T-cell (primary cell): ENCODE measurements at regions of chr17 and their contacts with region 1.

Region 1: DNA sequence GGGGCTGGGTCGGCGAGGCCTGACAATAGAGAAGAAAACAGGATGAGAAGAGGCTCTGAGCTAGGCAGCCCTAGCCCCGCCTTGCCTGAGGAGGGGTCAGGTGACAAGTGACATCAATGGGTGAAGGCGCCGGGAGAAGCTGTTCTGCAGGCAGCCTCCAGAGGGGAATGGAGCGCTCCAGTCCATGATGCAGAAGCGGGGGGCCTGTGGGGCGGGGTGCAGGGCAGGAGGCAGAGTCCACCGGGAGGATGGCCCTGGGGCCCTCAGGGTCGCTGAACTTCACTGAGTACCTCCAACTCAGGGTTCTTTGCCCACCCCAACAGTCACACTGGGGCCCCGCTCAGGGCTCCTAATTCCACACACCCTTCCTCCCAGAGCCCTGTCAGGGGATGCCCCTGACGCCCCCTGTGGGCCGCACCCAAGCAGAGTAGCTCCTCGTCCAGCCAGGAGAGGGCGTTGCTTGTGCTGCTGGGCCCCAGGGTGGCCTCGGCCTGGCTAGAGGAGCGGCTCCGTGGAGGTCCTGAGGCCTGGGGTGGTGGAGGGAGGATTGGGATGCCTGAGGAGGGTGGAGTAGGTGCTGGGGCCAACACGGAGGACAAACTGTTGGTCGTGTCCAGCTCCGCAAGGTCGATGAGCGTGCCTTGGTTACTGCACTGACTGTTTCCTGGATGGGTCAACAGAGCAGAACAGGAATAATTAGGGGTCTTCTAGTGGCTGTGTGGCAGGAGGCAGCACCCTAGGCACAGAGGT is 20.8 kb downstream of the GGA3 start:
- DNase-seq: peak in 10 of 35 experiments; percentile 20 to 49 (median 28)
- ATAC-seq: peak in 3 of 4 experiments; percentile 11 to 20 (median 18)
- H3K4me3 ChIP-seq: no peak overlapping the region
- H3K4me3 Mint-ChIP-seq: no peak overlapping the region
- H3K27ac ChIP-seq: no peak overlapping the region
- H3K27ac Mint-ChIP-seq: peak overlapping the region; percentile 16 to 65
- H3K4me1 ChIP-seq: peaks cover 0 to 63% of the 10 kb centered on the region in 2 experiments
- H3K4me1 Mint-ChIP-seq: peaks cover 26 to 43% (median 34%) of the 10 kb centered on the region in 3 donors
- H3K27me3 ChIP-seq: no peaks in the 10 kb centered on the region
- H3K27me3 Mint-ChIP-seq: no peaks in the 10 kb centered on the region

Region 2: DNA sequence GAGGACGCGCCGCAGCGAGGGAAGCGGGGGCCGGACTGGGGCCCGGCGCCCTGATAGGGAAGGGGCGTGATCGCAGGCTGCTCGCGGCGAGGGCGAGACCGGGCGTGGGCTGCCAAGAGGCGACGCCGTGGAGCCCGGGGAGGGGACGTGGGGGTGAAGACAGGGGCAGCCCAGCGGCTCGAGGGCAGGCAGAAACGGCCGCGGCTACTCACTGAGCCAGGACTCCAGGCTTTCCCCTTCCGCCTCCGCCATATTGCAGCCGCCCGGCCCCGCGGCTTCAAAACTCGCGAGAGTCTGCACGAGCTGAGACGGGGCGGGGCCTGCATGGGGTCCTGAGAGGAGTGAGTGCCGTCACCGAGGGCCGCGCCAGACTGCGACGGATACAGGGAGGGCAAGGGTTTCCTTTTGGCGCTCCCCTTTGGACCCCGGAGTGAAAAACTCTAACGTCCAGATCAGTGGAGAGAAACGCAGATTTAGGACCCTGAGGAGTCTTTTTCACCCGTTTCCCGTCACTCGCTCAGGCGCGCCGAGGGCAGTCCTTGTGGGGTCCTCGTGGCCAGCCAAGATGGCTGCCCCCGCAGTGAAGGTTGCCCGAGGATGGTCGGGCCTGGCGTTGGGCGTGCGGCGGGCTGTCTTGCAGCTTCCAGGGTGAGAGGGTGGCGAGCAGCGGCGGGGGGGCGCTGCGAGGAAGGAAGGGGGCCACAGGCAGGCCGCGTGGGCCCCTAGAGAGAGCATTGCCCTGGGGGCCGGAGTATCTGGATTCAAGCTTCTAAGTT is 21.0 kb after region 1 on chr17 and contains the starts of genes GGA3 and MRPS7:
- CTCF ChIA-PET with region 1: interaction called in 1 of 2 experiments, 12 read pairs
- POLR2A ChIA-PET with region 1: interaction called in 1 of 2 experiments, 5 read pairs
- DNase-seq: peak; percentile 90 to 97 (median 95)
- ATAC-seq: peak; percentile 92 to 98 (median 97)
- H3K4me3 ChIP-seq: peak within 1 kb of the TSS; percentile 78 to 79
- H3K4me3 Mint-ChIP-seq: peak within 1 kb of the TSS; percentile 94 to 97 (median 95)
- H3K27ac ChIP-seq: peak within 1 kb of the TSS; percentile 99
- H3K27ac Mint-ChIP-seq: peak within 1 kb of the TSS; percentile 99 to 100
- H3K4me1 ChIP-seq: peaks cover 22 to 32% of the 10 kb centered on the region in 2 experiments
- H3K4me1 Mint-ChIP-seq: peaks cover 53 to 59% (median 56%) of the 10 kb centered on the region in 3 donors
- H3K27me3 ChIP-seq: no peaks in the 10 kb centered on the region
- H3K27me3 Mint-ChIP-seq: no peaks in the 10 kb centered on the region
- total RNA-seq, gene GGA3: 78.1 to 118 (median 102) TPM
- total RNA-seq, gene MRPS7: 29.8 to 39.4 (median 33.6) TPM

Region 3: DNA sequence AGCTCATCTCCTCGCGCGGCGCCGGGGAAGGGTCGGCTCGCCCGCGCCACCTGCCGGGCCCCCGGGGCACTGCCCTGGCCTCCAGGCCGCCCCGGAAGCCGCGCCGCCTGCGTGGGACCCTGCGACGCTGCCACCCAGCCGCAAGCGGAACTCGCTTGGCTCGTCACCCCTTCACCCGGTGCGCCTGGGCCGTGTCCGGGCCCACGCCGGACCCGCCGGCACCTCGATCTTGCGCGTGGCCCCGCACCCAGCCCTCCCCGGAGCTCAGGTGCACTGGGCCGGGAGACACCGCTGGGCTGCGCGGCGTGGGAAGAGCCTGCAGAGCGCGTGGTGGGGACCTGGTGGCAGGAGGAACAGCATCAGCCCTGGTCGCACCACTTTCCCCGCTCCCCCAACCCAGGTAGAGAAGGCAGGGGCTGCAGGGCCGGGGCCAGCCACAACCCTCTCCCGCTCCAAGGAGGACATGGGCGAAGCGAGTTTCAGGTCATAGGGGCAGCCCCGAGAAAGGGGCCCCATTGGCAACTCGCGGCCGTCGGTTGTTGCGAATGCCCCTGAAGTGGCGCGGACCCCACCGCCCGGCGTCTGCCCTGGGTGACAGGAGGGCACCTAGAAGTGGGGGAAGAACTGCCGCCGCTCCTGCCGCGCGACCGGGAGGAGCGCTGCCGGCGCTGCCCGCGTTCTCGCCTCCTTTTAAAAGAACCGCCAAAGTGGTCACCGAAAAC is 30.8 kb after region 1 on chr17:
- CTCF ChIA-PET with region 1: interaction called in 1 of 2 experiments, 12 read pairs
- POLR2A ChIA-PET with region 1: no interaction called
- DNase-seq: peak; percentile 67 to 94 (median 83)
- ATAC-seq: peak; percentile 87 to 94 (median 90)
- H3K4me3 ChIP-seq: peak overlapping the region; percentile 79 to 92
- H3K4me3 Mint-ChIP-seq: peak overlapping the region; percentile 80 to 84 (median 81)
- H3K27ac ChIP-seq: peak overlapping the region; percentile 85
- H3K27ac Mint-ChIP-seq: peak overlapping the region; percentile 81 to 91
- H3K4me1 ChIP-seq: peaks cover 5 to 36% of the 10 kb centered on the region in 2 experiments
- H3K4me1 Mint-ChIP-seq: peaks cover 24 to 40% (median 31%) of the 10 kb centered on the region in 3 donors
- H3K27me3 ChIP-seq: no peaks in the 10 kb centered on the region
- H3K27me3 Mint-ChIP-seq: no peaks in the 10 kb centered on the region